Activated CD8-positive, alpha-beta T cell treated with anti-CD3 and anti-CD28 coated beads for 36 hours (primary cell): ENCODE measurements at regions of chr20 and their contacts with region 1.

Region 1: GRCh38 chr20:43994486-43995100 is 79.9 kb downstream of the TOX2 start:
- DNase-seq: no peak
- ATAC-seq: no peak
- H3K4me3 Mint-ChIP-seq: no peak overlapping the region
- H3K27ac Mint-ChIP-seq: no peak overlapping the region
- H3K4me1 Mint-ChIP-seq: peaks cover 1% of the 10 kb centered on the region
- H3K27me3 Mint-ChIP-seq: no peaks in the 10 kb centered on the region
- CTCF ChIP-seq: no peak

Region 2: DNA sequence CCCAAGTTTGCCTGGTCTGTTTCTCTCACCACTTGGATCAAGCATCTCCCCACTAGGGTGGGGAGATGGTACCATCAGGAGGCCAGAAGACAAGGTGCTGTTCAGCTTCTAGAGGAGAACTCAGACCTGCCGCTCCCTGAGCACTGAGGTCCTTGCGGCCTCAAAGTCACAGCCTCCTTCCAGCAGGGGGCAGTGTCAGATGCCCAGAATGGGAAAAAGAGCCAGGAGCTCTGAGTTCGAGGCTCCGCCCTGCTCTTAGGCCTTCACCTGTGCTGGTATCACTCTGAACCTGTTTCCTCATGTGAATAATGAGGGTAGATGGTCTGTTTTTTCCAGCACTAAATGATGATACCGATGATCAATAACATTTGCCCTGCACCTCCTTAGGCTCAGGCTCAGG is 11.2 kb before region 1 on chr20:
- CTCF ChIA-PET with region 1: interaction called, 11 read pairs
- POLR2A ChIA-PET with region 1: interaction called, 3 read pairs
- intact Hi-C with region 1: no loop called
- DNase-seq: peak; percentile 62
- ATAC-seq: no peak
- H3K4me3 Mint-ChIP-seq: no peak overlapping the region
- H3K27ac Mint-ChIP-seq: no peak overlapping the region
- H3K4me1 Mint-ChIP-seq: peaks cover 27% of the 10 kb centered on the region
- H3K27me3 Mint-ChIP-seq: peaks cover 18% of the 10 kb centered on the region
- CTCF ChIP-seq: peak; percentile 38